ENCODE measurements at regions of chr19 and their contacts with region 1.

Region 1: DNA sequence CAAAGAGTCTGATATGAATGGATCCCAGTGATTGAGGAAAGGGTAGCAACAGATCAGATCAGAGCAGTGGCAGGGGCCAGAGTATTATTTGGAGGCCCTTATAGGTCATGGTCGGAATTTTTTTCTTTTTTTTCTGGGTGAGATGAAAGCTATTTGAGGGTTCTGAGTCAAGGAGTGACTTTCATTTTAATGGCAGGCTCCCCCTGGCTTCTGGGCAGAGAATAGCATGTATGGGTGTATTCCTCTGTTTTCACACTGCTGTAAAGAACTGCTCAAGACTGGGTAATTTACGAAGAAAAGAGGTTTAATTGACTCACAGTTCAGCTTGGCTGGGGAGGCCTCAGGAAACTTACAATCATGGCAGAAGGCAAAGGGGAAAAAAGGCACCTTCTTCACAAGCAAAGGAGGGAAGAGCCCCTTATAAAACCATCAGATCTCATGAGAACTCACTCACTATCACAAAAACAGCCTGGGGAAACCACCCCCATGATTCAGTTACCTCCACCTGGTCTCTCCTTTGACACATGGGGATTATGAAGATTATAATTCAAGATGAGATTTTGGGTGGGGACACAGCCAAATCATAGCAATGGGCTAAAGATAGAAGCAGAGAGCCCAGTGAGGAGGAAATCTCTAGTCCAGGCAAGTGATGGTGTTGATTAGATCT is 3.0 kb upstream of the SLC6A16 start:
- DNase-seq: peak in 7 of 9 experiments; percentile 17 to 64 (median 47)
- ATAC-seq: peak; percentile 53
- H3K4me3 ChIP-seq: no peak overlapping the region
- H3K4me3 Mint-ChIP-seq: no peak overlapping the region
- H3K27ac ChIP-seq: no peak overlapping the region
- H3K27ac Mint-ChIP-seq: peak overlapping the region; percentile 38
- H3K4me1 ChIP-seq: peaks cover 23% of the 10 kb centered on the region
- H3K4me1 Mint-ChIP-seq: peaks cover 44% of the 10 kb centered on the region
- H3K27me3 ChIP-seq: no peaks in the 10 kb centered on the region
- H3K27me3 Mint-ChIP-seq: no peaks in the 10 kb centered on the region
- CTCF ChIP-seq: peak; percentile 70

Region 2: GRCh38 chr19:49301165-49301865 is 26.7 kb before region 1 on chr19:
- CTCF ChIA-PET with region 1: interaction called, 10 read pairs
- POLR2A ChIA-PET with region 1: no interaction called
- intact Hi-C with region 1: no loop called
- DNase-seq: peak; percentile 58 to 86 (median 82)
- ATAC-seq: peak; percentile 83
- H3K4me3 ChIP-seq: no peak overlapping the region
- H3K4me3 Mint-ChIP-seq: no peak overlapping the region
- H3K27ac ChIP-seq: no peak overlapping the region
- H3K27ac Mint-ChIP-seq: no peak overlapping the region
- H3K4me1 ChIP-seq: peaks cover 5% of the 10 kb centered on the region
- H3K4me1 Mint-ChIP-seq: peaks cover 8% of the 10 kb centered on the region
- H3K27me3 ChIP-seq: no peaks in the 10 kb centered on the region
- H3K27me3 Mint-ChIP-seq: no peaks in the 10 kb centered on the region
- CTCF ChIP-seq: peak; percentile 88